Ascending aorta (tissue), 2 donors: ENCODE measurements at regions of chr6 and their contacts with region 1.

Region 1: GRCh38 chr6:5339786-5340185 is 78.5 kb downstream of the FARS2 start:
- DNase-seq: no peak
- H3K4me3 ChIP-seq: no peak overlapping the region
- H3K27ac ChIP-seq: no peak overlapping the region
- H3K4me1 ChIP-seq: peaks cover 0 to 4% of the 10 kb centered on the region in 2 donors
- H3K27me3 ChIP-seq: no peaks in the 10 kb centered on the region
- CTCF ChIP-seq: no peak

Region 2: GRCh38 chr6:4994741-4995140 is 345.0 kb before region 1 on chr6:
- intact Hi-C with region 1: no loop called
- DNase-seq: no peak
- H3K4me3 ChIP-seq: no peak overlapping the region
- H3K27ac ChIP-seq: no peak overlapping the region
- H3K4me1 ChIP-seq: no peaks in the 10 kb centered on the region
- H3K27me3 ChIP-seq: no peaks in the 10 kb centered on the region
- CTCF ChIP-seq: no peak

Region 3: GRCh38 chr6:5365436-5366195 is 25.8 kb after region 1 on chr6:
- intact Hi-C with region 1: loop called (anchors 2 kb)
- DNase-seq: no peak
- H3K4me3 ChIP-seq: no peak overlapping the region
- H3K27ac ChIP-seq: no peak overlapping the region
- H3K4me1 ChIP-seq: no peaks in the 10 kb centered on the region
- H3K27me3 ChIP-seq: no peaks in the 10 kb centered on the region
- CTCF ChIP-seq: no peak

Region 4: GRCh38 chr6:5422321-5422915 is 82.6 kb after region 1 on chr6:
- intact Hi-C with region 1: no loop called
- DNase-seq: no peak
- H3K4me3 ChIP-seq: no peak overlapping the region
- H3K27ac ChIP-seq: no peak overlapping the region
- H3K4me1 ChIP-seq: no peaks in the 10 kb centered on the region
- H3K27me3 ChIP-seq: no peaks in the 10 kb centered on the region
- CTCF ChIP-seq: no peak